ENCODE measurements at regions of chr2 and their contacts with region 1.

Region 1: DNA sequence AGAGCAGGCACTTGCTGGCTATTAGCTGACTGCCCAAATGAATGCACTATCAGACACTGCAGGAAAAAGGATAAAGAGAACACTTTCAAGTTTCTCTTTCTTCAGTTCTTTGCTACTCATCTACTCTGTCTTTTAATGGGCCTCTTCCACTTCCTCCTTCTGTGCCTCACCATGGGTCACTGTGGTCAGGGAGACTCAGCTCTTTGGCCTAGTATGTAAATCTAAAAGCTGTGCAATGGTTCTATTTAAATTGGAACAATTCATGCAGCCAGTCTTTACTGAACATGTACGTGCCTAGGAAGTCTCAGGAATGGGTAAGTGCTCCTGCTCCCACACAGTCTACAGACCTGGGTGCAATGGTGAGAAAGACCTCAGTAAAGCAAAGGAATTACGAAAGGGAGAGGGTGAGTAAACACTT is 79.1 kb upstream of the DNMT3A start:
- DNase-seq: no peak
- ATAC-seq: peak; percentile 30

Region 2: GRCh38 chr2:23545396-23545795 is 1875.4 kb before region 1 on chr2:
- intact Hi-C with region 1: no loop called
- DNase-seq: no peak
- ATAC-seq: no peak

Region 3: GRCh38 chr2:24871852-24872323 is 548.9 kb before region 1 on chr2:
- intact Hi-C with region 1: loop called (anchors 10 kb)
- DNase-seq: peak; percentile 81
- ATAC-seq: peak; percentile 79